ENCODE measurements at regions of chr1 and their contacts with region 1.

Region 1: GRCh38 chr1:16351994-16352841 is at the start of gene FBXO42:
- DNase-seq: peak; percentile 95
- CTCF ChIP-seq: peak; percentile 85

Region 2: DNA sequence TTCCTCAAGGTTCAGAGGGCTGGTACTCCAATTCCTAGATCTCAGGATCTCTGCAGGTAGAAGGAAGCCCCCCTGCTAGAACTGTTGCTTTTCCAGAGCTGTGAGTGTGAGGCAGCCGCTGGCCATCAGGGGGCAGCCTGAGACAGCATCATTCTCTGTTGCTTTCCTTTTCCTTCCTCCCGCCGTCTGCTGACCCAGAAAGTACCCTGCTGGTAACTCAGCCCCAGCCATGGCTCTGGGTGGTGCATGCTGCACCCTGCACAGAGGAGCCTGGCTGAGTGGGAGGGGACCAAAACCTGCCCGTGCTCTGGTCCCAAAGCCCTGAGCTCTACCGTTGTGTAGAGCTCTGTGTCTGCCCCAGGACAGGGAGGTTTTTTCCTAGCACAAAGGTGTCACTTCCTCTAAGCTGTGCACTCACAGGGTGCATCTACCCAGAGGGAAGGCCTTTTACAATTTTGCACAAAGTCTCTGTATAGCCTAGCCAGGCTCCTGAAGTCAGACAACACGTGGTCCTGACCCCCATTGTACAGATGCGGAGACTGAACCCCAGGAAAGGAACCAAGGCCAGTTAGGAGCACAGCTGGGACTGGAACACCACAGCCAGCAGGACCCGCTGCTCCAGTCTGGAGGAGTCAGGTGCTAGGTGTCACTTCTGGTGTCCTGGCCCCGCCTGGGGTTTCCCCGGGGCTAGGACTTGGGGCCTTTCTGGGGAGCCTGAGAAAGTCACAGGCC is 273.1 kb before region 1 on chr1:
- in situ Hi-C with region 1: loop called (anchors 25 kb)
- DNase-seq: peak; percentile 87
- CTCF ChIP-seq: peak; percentile 83

Region 3: GRCh38 chr1:16293538-16293937 is 58.7 kb before region 1 on chr1:
- in situ Hi-C with region 1: loop called (anchors 10 kb)
- DNase-seq: no peak
- CTCF ChIP-seq: no peak

Region 4: DNA sequence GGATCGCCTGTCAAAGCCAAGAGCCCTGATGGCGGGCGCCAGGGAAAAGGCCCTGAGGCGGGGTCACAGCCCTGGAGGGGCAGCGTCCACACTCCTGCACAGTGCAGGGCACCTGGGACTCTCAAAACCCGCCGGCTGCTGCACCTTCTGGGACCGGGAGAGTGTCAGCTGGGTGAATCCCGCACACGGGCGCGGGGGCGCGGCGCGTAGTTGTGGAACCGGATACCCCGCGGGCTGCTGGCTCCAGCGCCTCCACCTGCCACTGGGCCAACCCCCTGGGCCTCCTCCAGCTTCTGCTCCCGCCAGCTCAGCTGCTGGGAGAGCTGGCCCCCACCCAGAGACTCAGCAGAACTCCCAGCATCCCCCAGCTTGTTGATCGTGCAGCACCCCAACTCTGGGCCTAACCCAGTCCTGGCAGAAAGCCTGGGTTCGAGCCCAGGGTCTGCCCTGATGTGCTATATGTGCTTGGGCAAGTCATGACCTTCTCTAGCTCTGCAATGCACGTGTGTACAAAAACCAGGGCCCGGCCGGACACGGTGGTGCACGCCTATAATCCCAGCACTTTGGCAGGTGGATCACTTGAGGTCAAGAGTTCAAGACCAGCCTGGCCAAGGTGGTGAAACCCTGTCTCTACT is 122.1 kb after region 1 on chr1:
- in situ Hi-C with region 1: no loop called
- DNase-seq: no peak
- CTCF ChIP-seq: no peak

Region 5: GRCh38 chr1:17027403-17027802 is 675.2 kb after region 1 on chr1:
- in situ Hi-C with region 1: no loop called
- DNase-seq: no peak
- CTCF ChIP-seq: no peak